ENCODE measurements at regions of chr21 and their contacts with region 1.

Region 1: DNA sequence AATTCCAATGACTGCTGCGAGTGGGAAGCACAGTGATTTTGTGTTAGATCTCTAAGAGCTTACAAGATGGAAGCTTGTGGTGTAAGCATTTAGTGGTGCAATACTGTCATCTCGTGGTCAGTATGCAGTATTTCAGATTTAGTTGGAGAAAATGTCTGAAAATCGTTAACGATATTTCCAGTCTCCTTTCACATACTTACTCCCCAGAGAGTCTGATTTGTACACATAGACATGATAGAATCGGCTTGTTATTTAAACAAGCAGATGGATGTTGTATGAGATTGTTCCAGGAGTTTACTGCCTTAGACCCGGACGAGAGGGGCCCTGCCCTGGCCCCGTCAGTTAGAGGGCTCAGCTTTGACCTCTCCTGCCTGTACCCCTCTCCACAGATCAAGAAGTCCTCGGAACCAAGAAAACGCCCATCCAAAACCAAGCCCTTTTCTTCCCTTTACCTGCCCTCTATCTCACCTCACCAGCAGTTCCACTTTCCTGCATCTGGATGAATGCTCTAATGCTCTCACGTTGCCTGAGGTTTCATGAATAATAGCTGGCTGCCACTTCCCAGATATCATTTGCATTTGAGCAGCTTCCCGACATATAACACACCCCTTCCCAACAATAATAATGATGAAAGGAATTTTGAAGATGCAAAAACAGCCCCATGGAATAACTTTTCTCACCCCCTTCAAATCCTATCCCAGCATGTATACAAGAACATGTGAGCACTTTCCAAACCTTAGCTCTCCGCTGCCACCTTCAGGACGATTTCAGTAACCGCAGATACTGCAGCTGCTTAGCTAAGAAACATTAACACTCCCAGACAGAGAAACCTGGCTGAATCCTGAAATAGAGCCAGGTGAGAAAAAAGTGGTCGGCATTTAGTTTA is 247.3 kb downstream of the LTN1 start:
- DNase-seq: peak; percentile 92
- ATAC-seq: peak; percentile 86
- H3K4me3 ChIP-seq: peak overlapping the region; percentile 63
- H3K27ac ChIP-seq: peak overlapping the region; percentile 59
- H3K4me1 ChIP-seq: peaks cover 13% of the 10 kb centered on the region
- H3K27me3 ChIP-seq: no peaks in the 10 kb centered on the region
- CTCF ChIP-seq: peak; percentile 91

Region 2: DNA sequence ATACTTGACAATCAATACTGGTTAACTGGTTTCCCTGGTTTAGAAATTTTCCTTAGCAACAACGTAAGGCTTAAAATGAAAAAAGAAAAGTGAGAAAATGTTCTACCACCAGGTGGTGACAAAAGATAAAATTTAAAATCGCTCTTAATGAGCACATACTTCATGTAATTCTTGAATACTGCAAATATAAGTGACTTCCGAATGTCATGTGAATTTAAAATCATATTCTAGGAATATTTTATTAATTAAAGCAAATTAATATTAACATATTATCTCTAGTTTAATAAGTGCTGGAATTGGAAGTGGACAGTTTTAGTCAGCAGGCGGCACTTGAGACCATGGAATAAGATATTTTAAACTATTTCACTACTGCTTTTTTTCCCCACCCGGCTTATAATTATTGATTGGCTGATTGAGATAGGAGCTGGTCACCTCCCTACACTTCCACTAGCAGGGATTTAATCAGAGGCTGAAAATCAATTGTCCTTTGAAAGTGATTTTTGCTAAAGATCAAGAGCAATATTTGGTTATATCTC is 1895.2 kb before region 1 on chr21:
- CTCF ChIA-PET with region 1: interaction called, 7 read pairs
- POLR2A ChIA-PET with region 1: no interaction called
- intact Hi-C with region 1: loop called (anchors 1 kb)
- DNase-seq: peak; percentile 80
- ATAC-seq: no peak
- H3K4me3 ChIP-seq: no peak overlapping the region
- H3K27ac ChIP-seq: no peak overlapping the region
- H3K4me1 ChIP-seq: peaks cover 5% of the 10 kb centered on the region; the same call in 1 of the 2 replicates
- H3K27me3 ChIP-seq: no peaks in the 10 kb centered on the region
- CTCF ChIP-seq: peak; percentile 70

Region 3: GRCh38 chr21:27759091-27759659 is 986.2 kb before region 1 on chr21:
- CTCF ChIA-PET with region 1: interaction called, 4 read pairs
- POLR2A ChIA-PET with region 1: no interaction called
- intact Hi-C with region 1: loop called (anchors 1 kb)
- DNase-seq: peak; percentile 39
- ATAC-seq: peak; percentile 83
- H3K4me3 ChIP-seq: no peak overlapping the region
- H3K27ac ChIP-seq: no peak overlapping the region
- H3K4me1 ChIP-seq: no peaks in the 10 kb centered on the region
- H3K27me3 ChIP-seq: no peaks in the 10 kb centered on the region
- CTCF ChIP-seq: peak; percentile 64

Region 4: GRCh38 chr21:28516991-28517592 is 228.3 kb before region 1 on chr21:
- CTCF ChIA-PET with region 1: interaction called, 3 read pairs
- POLR2A ChIA-PET with region 1: no interaction called
- intact Hi-C with region 1: loop called (anchors 1 kb)
- DNase-seq: peak; percentile 77
- ATAC-seq: peak; percentile 94
- H3K4me3 ChIP-seq: no peak overlapping the region
- H3K27ac ChIP-seq: peak overlapping the region; percentile 27
- H3K4me1 ChIP-seq: peaks cover 13% of the 10 kb centered on the region
- H3K27me3 ChIP-seq: no peaks in the 10 kb centered on the region
- CTCF ChIP-seq: peak; percentile 91

Region 5: DNA sequence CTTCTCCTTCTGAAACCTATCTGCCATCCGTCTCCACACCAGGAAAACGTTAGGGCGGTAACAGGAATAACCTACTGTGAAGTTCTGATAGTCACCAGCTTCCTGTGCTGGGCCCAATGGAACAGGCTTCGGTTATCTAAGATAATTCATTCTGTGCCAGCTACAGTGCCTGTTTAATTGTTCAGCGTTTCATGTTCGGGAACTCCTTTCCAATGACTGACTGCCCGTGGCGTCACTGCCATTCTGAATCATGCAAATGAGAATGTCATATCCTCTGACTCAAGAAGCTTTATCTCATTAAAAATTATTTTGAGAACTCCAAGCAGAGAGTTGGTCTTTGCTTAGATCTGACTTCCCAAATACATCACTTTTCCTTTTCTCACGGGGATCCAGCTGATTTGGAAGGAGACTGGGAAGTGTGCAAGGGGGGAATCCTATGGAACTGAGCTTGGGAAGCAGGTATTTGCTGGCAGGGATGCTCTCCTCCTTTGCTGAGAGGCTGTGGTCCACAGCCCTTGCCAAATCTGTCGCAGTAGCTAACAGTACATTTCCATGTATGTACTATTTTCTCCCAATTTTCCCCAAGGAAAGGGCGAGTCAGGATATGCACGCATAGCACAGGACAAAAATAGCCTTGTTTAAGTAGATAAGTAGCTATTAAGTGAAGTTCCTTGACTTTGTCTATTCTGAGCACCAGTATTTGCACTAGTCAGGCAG is 111.4 kb before region 1 on chr21:
- CTCF ChIA-PET with region 1: interaction called, 3 read pairs
- POLR2A ChIA-PET with region 1: interaction called, 4 read pairs
- intact Hi-C with region 1: loop called (anchors 1 kb)
- DNase-seq: peak; percentile 91
- ATAC-seq: peak; percentile 31
- H3K4me3 ChIP-seq: peak overlapping the region; percentile 11; the same call in 1 of the 2 replicates
- H3K27ac ChIP-seq: peak overlapping the region; percentile 97
- H3K4me1 ChIP-seq: peaks cover 70% of the 10 kb centered on the region
- H3K27me3 ChIP-seq: no peaks in the 10 kb centered on the region
- CTCF ChIP-seq: no peak

Region 6: GRCh38 chr21:28884976-28885852 is 139.8 kb after region 1 on chr21:
- CTCF ChIA-PET with region 1: no interaction called
- POLR2A ChIA-PET with region 1: interaction called, 12 read pairs
- intact Hi-C with region 1: no loop called
- DNase-seq: peak; percentile 96
- ATAC-seq: peak; percentile 96
- H3K4me3 ChIP-seq: peak overlapping the region; percentile 72
- H3K27ac ChIP-seq: peak overlapping the region; percentile 87
- H3K4me1 ChIP-seq: peaks cover 16% of the 10 kb centered on the region; the same call in 1 of the 2 replicates
- H3K27me3 ChIP-seq: no peaks in the 10 kb centered on the region
- CTCF ChIP-seq: no peak